Tibial artery (tissue), 4 donors: ENCODE measurements at regions of chr17 and their contacts with region 1.

Region 1: DNA sequence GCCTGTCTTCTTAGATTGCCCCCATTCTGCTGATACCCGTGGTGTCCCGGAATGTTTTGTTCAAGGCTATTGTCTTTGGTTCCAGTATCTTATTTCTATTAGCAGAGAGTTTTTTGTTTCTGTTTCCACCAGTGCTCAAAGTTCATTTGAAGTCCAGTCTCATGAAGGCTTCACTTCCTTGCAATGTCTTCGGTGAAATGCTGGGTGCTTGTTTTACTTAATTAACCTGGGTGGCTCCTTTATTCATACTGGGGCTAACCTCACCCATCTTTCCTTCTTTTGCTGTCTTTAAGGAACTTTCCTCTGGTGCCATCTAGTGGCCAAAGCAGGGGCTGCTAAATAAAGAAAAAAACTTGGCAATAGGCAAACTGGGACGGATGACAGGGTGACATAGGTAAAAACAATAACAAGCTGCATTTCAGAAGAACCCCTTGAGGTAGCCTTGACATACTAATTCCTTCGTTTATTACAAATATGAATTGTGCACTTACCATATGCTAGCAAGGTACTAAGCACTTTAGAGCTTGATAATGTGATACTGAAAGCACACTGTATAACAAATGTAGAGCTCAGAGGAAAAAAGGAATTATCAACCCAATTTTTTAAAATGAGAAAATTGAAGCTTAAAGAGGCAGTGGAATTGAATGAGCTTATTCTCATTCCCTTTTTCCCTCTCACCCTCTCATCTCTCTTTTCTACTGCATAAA is 2.8 kb upstream of the SMIM36 start:
- DNase-seq: peak in 1 of 2 donors; percentile 76
- H3K4me3 ChIP-seq: no peak overlapping the region
- H3K27ac ChIP-seq: no peak overlapping the region
- H3K4me1 ChIP-seq: no peaks in the 10 kb centered on the region
- H3K27me3 ChIP-seq: peaks cover 0 to 5% of the 10 kb centered on the region in 2 donors
- CTCF ChIP-seq: peak; percentile 77 to 89

Region 2: GRCh38 chr17:54992797-54993639 is 521.0 kb before region 1 on chr17:
- intact Hi-C with region 1: loop called (anchors 10 kb)
- DNase-seq: no peak
- H3K4me3 ChIP-seq: no peak overlapping the region
- H3K27ac ChIP-seq: no peak overlapping the region
- H3K4me1 ChIP-seq: no peaks in the 10 kb centered on the region
- H3K27me3 ChIP-seq: no peaks in the 10 kb centered on the region
- CTCF ChIP-seq: peak; percentile 56 to 69

Region 3: GRCh38 chr17:55356434-55357328 is 157.4 kb before region 1 on chr17:
- intact Hi-C with region 1: loop called (anchors 10 kb)
- DNase-seq: peak in 1 of 2 donors; percentile 85
- H3K4me3 ChIP-seq: no peak overlapping the region
- H3K27ac ChIP-seq: no peak overlapping the region
- H3K4me1 ChIP-seq: no peaks in the 10 kb centered on the region
- H3K27me3 ChIP-seq: no peaks in the 10 kb centered on the region
- CTCF ChIP-seq: peak; percentile 65 to 71

Region 4: DNA sequence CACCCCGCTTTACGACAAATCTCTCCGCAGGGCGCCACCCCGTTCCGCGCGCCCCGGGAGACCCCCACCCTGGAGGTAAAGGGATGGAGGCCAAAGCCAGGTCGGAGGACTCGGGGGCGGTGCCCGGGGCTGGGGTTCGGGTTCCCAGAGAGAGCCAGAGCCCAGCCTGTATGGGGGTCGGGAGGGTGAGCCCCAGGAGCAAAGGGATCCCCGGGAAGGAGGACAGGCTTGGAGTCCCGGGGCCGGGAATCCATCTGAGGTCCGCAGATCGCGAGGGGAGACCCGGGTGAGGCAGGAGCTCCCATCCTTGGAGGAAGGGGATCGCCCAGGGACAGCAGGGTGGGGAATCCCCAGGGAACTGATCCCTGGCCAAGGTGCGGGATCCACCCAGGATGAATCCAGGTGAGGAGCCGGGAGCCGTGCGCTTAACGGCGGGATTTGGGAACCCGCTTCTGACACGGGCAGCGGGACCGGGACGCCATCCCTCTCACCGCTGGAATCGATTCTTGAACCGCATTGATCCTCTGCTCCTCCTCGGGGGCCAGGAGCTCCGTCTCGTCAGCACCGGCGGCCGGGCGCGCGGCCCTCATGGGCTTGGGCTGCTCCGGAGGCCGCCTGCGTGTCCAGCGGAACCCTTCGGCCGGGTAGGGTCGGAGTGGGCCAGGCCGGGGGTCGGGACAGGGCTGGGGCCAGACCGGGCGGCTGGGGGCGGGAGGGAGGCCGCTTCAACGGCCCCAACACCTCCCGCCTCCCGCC is 92.7 kb before region 1 on chr17 and contains the start of gene MMD:
- intact Hi-C with region 1: loop called (anchors 10 kb)
- DNase-seq: peak in 1 of 2 donors; percentile 67
- H3K4me3 ChIP-seq: peak within 1 kb of the TSS; percentile 88 to 92
- H3K27ac ChIP-seq: peak within 1 kb of the TSS; percentile 78 to 81
- H3K4me1 ChIP-seq: peaks cover 0 to 29% (median 14%) of the 10 kb centered on the region in 4 donors
- H3K27me3 ChIP-seq: peaks cover 0 to 12% of the 10 kb centered on the region in 2 donors
- CTCF ChIP-seq: no peak

Region 5: GRCh38 chr17:55726440-55726839 is 212.4 kb after region 1 on chr17:
- intact Hi-C with region 1: no loop called
- DNase-seq: peak; percentile 78 to 79
- H3K4me3 ChIP-seq: no peak overlapping the region
- H3K27ac ChIP-seq: peak overlapping the region; percentile 7 to 39
- H3K4me1 ChIP-seq: peaks cover 0 to 63% (median 18%) of the 10 kb centered on the region in 4 donors
- H3K27me3 ChIP-seq: no peaks in the 10 kb centered on the region
- CTCF ChIP-seq: no peak